GM12878 (cell line): ENCODE measurements at regions of chr12 and their contacts with region 1.

Region 1: GRCh38 chr12:55973598-55974307 is at the start of gene RAB5B:
- DNase-seq: peak; percentile 100
- ATAC-seq: peak; percentile 91
- H3K4me3 ChIP-seq: peak within 1 kb of the TSS; percentile 88
- H3K27ac ChIP-seq: peak within 1 kb of the TSS; percentile 85
- H3K4me1 ChIP-seq: peaks cover 2% of the 10 kb centered on the region; the same call in 1 of the 2 replicates
- H3K27me3 ChIP-seq: no peaks in the 10 kb centered on the region
- CTCF ChIP-seq: no peak
- EP300 ChIP-seq: no peak
- POLR2A ChIP-seq: peak; percentile 97
- RAD21 ChIP-seq: no peak
- polyA plus RNA-seq, gene RAB5B: 7.5 to 11.3 TPM

Region 2: GRCh38 chr12:55817346-55818139 is 156.2 kb before region 1 on chr12 and contains the starts of genes ORMDL2 and SARNP:
- CTCF ChIA-PET with region 1: interaction called, 5 read pairs
- POLR2A ChIA-PET with region 1: interaction called, 12 read pairs
- RAD21 ChIA-PET with region 1: interaction called, 7 read pairs
- SMC1A ChIA-PET with region 1: interaction called, 7 read pairs
- in situ Hi-C with region 1: no loop called
- intact Hi-C with region 1: no loop called
- DNase-seq: peak; percentile 100
- ATAC-seq: peak; percentile 98
- H3K4me3 ChIP-seq: peak within 1 kb of the TSS; percentile 85
- H3K27ac ChIP-seq: peak within 1 kb of the TSS; percentile 92
- H3K4me1 ChIP-seq: peaks cover 10% of the 10 kb centered on the region; the same call in 1 of the 2 replicates
- H3K27me3 ChIP-seq: no peaks in the 10 kb centered on the region
- CTCF ChIP-seq: no peak
- EP300 ChIP-seq: no peak
- POLR2A ChIP-seq: peak; percentile 86
- RAD21 ChIP-seq: no peak
- polyA plus RNA-seq, gene ORMDL2: 123 to 135 TPM
- polyA plus RNA-seq, gene SARNP: 419 to 445 TPM

Region 3: GRCh38 chr12:55931780-55932550 is 41.8 kb before region 1 on chr12:
- CTCF ChIA-PET with region 1: interaction called, 16 read pairs
- POLR2A ChIA-PET with region 1: interaction called, 66 read pairs
- RAD21 ChIA-PET with region 1: interaction called, 25 read pairs
- SMC1A ChIA-PET with region 1: interaction called, 6 read pairs
- in situ Hi-C with region 1: no loop called
- intact Hi-C with region 1: loop called (anchors 1 kb)
- DNase-seq: no peak
- ATAC-seq: peak; percentile 28
- H3K4me3 ChIP-seq: peak overlapping the region; percentile 99
- H3K27ac ChIP-seq: peak overlapping the region; percentile 83
- H3K4me1 ChIP-seq: peaks cover 8% of the 10 kb centered on the region; the same call in 1 of the 2 replicates
- H3K27me3 ChIP-seq: no peaks in the 10 kb centered on the region
- CTCF ChIP-seq: no peak
- EP300 ChIP-seq: no peak
- POLR2A ChIP-seq: peak; percentile 45
- RAD21 ChIP-seq: no peak

Region 4: GRCh38 chr12:55991110-55991509 is 17.4 kb after region 1 on chr12:
- CTCF ChIA-PET with region 1: interaction called, 55 read pairs
- POLR2A ChIA-PET with region 1: interaction called, 85 read pairs
- RAD21 ChIA-PET with region 1: interaction called, 56 read pairs
- SMC1A ChIA-PET with region 1: interaction called, 20 read pairs
- in situ Hi-C with region 1: no loop called
- intact Hi-C with region 1: no loop called
- DNase-seq: no peak
- ATAC-seq: no peak
- H3K4me3 ChIP-seq: no peak overlapping the region
- H3K27ac ChIP-seq: no peak overlapping the region
- H3K4me1 ChIP-seq: no peaks in the 10 kb centered on the region
- H3K27me3 ChIP-seq: no peaks in the 10 kb centered on the region
- CTCF ChIP-seq: no peak
- EP300 ChIP-seq: no peak
- POLR2A ChIP-seq: no peak
- RAD21 ChIP-seq: no peak

Region 5: DNA sequence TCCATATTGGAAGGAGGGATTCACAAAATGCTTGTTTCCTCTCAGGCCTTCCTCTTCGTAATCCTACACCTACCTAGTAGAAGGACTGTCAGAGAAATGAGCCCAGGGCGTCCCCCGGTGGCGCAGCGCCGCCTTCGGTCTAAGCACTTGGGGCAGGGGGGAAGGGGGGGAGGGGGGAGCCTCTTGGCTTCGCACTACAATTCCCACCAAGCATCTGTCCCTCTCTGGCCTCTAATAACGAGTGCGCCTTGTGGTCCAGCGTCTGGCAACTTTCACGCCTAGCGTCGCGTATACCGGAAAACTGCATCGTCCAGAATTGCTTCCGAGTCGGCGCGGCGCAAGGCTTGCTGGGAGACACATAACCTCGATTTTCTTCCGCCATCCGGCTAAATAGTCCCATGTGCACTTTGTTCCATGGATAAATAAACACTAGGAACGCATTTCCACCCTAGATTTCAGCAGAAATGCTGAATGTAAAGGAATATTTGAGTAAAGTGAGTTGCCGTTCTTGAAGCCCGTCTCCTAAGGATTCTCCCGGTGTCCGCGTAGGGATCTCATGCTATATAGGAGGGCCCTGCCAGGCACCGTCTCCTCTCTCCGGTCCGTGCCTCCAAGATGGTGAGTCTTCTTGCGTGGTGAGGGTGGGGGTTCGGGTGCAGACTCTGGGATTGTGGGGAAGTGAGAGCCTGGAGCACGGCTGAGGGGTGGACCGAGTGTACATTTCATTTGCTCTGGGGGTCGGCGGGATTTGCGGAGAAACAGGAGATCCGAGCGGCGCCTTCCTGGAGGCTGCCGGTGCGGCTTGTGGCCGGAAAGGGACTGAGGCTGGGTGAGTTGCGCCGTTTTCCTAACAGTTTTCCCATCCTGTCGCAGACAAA is 68.0 kb after region 1 on chr12 and contains the start of gene RPS26:
- CTCF ChIA-PET with region 1: interaction called, 6 read pairs
- POLR2A ChIA-PET with region 1: interaction called, 11 read pairs
- RAD21 ChIA-PET with region 1: interaction called, 5 read pairs
- SMC1A ChIA-PET with region 1: interaction called, 4 read pairs
- in situ Hi-C with region 1: no loop called
- intact Hi-C with region 1: loop called (anchors 1 kb)
- DNase-seq: peak; percentile 98
- ATAC-seq: peak; percentile 96
- H3K4me3 ChIP-seq: peak within 1 kb of the TSS; percentile 98
- H3K27ac ChIP-seq: peak within 1 kb of the TSS; percentile 98
- H3K4me1 ChIP-seq: peaks cover 13% of the 10 kb centered on the region
- H3K27me3 ChIP-seq: no peaks in the 10 kb centered on the region
- CTCF ChIP-seq: peak; percentile 46 to 64 (median 61)
- EP300 ChIP-seq: peak in 1 of 2 experiments; percentile 60; a peak in 2 of 4 replicates
- POLR2A ChIP-seq: peak; percentile 100
- RAD21 ChIP-seq: peak; percentile 85
- polyA plus RNA-seq, gene RPS26: 2,920 to 3,147 TPM